ENCODE measurements at regions of chr1 and their contacts with region 1.

Region 1: DNA sequence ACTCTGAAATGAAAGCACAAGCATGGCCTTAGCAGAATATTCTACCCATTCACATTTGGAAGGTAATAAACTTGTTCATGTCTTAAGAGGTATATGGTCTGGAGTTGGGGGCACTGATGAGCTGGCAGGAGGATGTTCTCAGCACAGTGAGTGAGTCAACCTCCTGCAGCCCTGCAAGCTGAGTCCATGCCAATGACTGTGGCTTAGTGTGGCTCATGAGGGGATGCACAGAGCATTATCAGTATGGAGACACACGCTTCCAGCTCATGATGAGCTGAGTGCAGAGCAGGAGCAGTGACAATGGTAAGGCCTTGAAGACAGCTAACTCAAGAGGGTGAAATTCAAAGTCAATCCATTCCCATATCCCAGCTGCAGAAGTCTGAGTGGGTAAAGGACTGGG is 102.3 kb downstream of the TNFSF18 start:
- DNase-seq: no peak
- H3K4me3 ChIP-seq: no peak overlapping the region
- CTCF ChIP-seq: no peak

Region 2: DNA sequence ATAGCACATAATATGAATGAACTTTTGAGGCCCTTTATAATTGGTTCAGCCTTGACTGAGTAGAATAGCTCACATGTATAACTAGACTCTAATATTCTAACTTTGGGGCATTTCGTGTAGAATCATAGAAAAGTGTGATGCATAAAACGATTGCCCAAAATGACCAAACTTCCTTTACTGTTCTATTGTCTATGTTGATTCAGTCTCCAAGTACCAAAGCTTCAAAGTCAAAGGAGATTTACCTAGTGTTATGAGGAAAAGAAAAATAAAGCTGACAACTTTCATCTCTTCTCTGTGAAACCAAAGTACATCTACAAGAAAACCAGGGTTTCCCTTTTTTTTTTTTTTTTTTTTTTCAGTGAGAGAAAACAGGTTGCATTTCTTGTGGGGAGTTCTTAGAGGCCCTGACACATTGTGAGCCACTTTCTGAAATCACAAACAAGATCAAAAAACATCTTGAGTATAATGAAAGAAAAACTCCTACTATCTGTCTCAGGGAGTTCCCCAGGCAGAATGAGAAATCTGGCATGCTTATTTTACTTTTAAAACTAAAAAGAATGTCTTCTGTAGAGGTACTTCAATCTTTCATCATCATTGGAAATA is 81.1 kb before region 1 on chr1:
- in situ Hi-C with region 1: loop called (anchors 5 kb)
- DNase-seq: no peak
- H3K4me3 ChIP-seq: no peak overlapping the region
- CTCF ChIP-seq: no peak

Measured in astrocyte of the cerebellum (primary cell).